ENCODE measurements at regions of chr4 and their contacts with region 1.

Region 1: GRCh38 chr4:165580351-165580905 is 201.6 kb downstream of the CPE start:
- DNase-seq: peak; percentile 85
- H3K4me3 ChIP-seq: no peak overlapping the region
- H3K27ac ChIP-seq: peak overlapping the region; percentile 91
- H3K4me1 ChIP-seq: peaks cover 20% of the 10 kb centered on the region
- H3K27me3 ChIP-seq: no peaks in the 10 kb centered on the region
- CTCF ChIP-seq: no peak
- POLR2A ChIP-seq: no peak

Region 2: DNA sequence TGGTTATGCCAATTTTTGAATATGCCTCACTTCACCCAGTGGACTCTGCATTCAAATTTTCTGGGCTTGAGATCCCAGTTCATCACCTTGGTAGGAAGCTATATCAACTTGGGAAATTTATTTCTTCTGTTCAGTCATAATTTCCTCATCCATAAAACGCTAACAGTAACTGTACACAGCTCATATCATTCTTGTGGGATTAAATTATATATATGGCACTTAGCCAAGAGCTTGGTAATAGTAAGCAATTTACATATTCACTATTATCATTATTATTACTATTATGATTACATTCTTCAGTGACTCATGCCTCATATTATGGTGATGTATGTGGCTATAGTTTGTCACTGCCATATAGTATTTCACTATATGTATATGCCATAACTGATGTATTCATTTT is 24.0 kb before region 1 on chr4:
- CTCF ChIA-PET with region 1: interaction called, 4 read pairs
- POLR2A ChIA-PET with region 1: no interaction called
- dilution Hi-C with region 1: no loop called
- intact Hi-C with region 1: loop called (anchors 1 kb)
- DNase-seq: peak; percentile 31
- H3K4me3 ChIP-seq: no peak overlapping the region
- H3K27ac ChIP-seq: no peak overlapping the region
- H3K4me1 ChIP-seq: peaks cover 15% of the 10 kb centered on the region
- H3K27me3 ChIP-seq: no peaks in the 10 kb centered on the region
- CTCF ChIP-seq: no peak
- POLR2A ChIP-seq: no peak

Region 3: DNA sequence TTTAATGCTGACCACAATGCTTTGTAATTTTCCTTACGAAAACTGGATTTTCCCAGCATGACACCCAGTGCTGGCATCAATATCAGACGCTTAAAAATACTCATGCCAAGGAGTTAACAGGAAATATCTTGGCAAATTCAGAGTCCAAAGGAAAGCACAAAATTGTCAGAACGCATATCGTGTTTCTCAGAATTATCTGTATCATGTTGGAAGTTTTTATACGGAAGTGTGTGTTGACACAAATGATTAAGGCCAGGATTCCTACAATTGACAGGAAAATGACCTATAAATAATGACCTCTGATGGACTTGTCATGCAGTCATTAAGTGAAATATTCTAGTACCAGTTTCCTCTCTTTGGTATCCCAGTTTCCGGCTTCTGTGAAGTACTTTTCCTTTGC is 160.5 kb after region 1 on chr4:
- CTCF ChIA-PET with region 1: no interaction called
- POLR2A ChIA-PET with region 1: no interaction called
- dilution Hi-C with region 1: no loop called
- intact Hi-C with region 1: loop called (anchors 1 kb)
- DNase-seq: peak; percentile 76
- H3K4me3 ChIP-seq: peak overlapping the region in 1 of 3 experiments; percentile 14
- H3K27ac ChIP-seq: peak overlapping the region; percentile 0
- H3K4me1 ChIP-seq: peaks cover 25% of the 10 kb centered on the region
- H3K27me3 ChIP-seq: no peaks in the 10 kb centered on the region
- CTCF ChIP-seq: no peak
- POLR2A ChIP-seq: peak; percentile 81